Motor neuron (in vitro differentiated cells): ENCODE measurements at regions of chr11 and their contacts with region 1.

Region 1: GRCh38 chr11:83836883-83837654 is 550.9 kb upstream of the CCDC90B start:
- ATAC-seq: peak; percentile 82 to 99 (median 92)
- H3K4me3 ChIP-seq: no peak overlapping the region
- H3K27ac ChIP-seq: no peak overlapping the region
- H3K4me1 ChIP-seq: peaks cover 0 to 2% of the 10 kb centered on the region in 2 donors

Region 2: GRCh38 chr11:84056696-84057376 is 219.8 kb after region 1 on chr11:
- in situ Hi-C with region 1: loop called in 1 of 9 experiments (anchors 25 kb)
- ATAC-seq: no peak
- H3K4me3 ChIP-seq: no peak overlapping the region
- H3K27ac ChIP-seq: no peak overlapping the region
- H3K4me1 ChIP-seq: peaks cover 0 to 4% of the 10 kb centered on the region in 2 donors

Region 3: DNA sequence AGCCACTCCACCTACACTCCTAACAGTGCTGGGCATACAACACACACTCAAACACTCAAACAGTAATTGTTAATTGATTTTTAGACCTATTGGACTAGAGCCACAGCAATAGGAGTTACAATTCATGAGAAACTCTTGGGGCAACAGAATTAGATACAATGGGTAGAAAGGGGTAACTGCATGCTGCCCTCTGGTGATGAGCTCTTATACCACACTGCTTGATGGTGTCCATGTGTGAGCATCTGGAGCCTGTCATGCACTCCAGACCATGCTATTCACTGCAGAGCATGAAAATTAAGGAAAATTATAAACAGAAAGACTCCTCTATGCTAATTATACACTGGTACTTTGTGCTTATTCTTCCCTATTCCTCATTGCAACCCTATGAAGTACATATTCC is 424.6 kb after region 1 on chr11:
- in situ Hi-C with region 1: loop called in 3 of 9 experiments (anchors 25 kb)
- ATAC-seq: peak in 2 of 8 experiments; percentile 44 to 55
- H3K4me3 ChIP-seq: no peak overlapping the region
- H3K27ac ChIP-seq: no peak overlapping the region
- H3K4me1 ChIP-seq: no peaks in the 10 kb centered on the region

Region 4: GRCh38 chr11:84384731-84385130 is 547.7 kb after region 1 on chr11:
- in situ Hi-C with region 1: loop called in 3 of 9 experiments (anchors 25 kb)
- ATAC-seq: peak in 1 of 8 experiments; percentile 18
- H3K4me3 ChIP-seq: no peak overlapping the region
- H3K27ac ChIP-seq: no peak overlapping the region
- H3K4me1 ChIP-seq: no peaks in the 10 kb centered on the region

Region 5: GRCh38 chr11:84524422-84525051 is 687.5 kb after region 1 on chr11:
- in situ Hi-C with region 1: loop called in 5 of 9 experiments (anchors 25 kb)
- ATAC-seq: no peak
- H3K4me3 ChIP-seq: no peak overlapping the region
- H3K27ac ChIP-seq: no peak overlapping the region
- H3K4me1 ChIP-seq: no peaks in the 10 kb centered on the region

Region 6: GRCh38 chr11:84536456-84536855 is 699.4 kb after region 1 on chr11:
- in situ Hi-C with region 1: loop called in 6 of 9 experiments (anchors 10 to 25 kb)
- ATAC-seq: no peak
- H3K4me3 ChIP-seq: no peak overlapping the region
- H3K27ac ChIP-seq: no peak overlapping the region
- H3K4me1 ChIP-seq: no peaks in the 10 kb centered on the region

Region 7: GRCh38 chr11:84558085-84558905 is 721.2 kb after region 1 on chr11:
- in situ Hi-C with region 1: loop called in 1 of 9 experiments (anchors 25 kb)
- ATAC-seq: peak; percentile 41 to 82 (median 66)
- H3K4me3 ChIP-seq: no peak overlapping the region
- H3K27ac ChIP-seq: no peak overlapping the region
- H3K4me1 ChIP-seq: no peaks in the 10 kb centered on the region